Heart right ventricle (tissue), 16 donors: ENCODE measurements at regions of chr1 and their contacts with region 1.

Region 1: DNA sequence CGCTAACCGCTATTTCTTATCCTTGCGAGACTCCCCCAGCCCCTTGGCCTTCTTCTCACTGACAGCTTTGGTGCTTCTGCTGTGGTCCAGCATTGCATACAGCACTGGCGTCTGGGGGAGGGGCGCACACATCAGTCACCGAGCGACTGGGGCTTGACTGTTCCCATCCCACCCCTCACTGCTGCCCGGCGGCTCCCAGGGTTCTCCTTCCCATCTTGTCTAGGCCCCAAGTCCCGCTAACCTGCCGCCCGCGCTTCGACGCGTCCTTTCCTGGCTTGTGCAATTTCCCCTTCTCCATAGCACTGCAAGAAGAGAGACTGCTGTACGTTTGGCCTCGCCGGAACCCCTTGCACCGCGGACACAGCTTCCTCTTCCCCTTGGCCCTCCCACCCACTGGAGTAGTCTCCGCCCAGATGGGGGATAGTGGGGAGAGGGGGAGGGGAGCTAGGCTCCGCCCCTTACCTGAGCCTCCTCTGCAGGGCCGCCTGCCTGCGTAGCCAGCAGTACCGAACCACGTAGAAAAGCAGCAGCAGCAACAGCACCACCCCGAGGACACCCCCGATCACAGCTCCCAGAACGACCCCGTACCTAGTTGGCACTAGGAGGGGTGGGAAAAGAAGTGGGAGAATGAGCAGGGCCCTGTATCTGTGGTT is 3.8 kb downstream of the MPZ start:
- DNase-seq: peak; percentile 75 to 77
- ATAC-seq: peak; percentile 85 to 94 (median 91)
- H3K4me3 ChIP-seq: peak overlapping the region; percentile 51 to 75 (median 62)
- H3K27ac ChIP-seq: peak overlapping the region in 8 of 10 donors; percentile 28 to 93 (median 62)
- H3K4me1 ChIP-seq: peaks cover 0 to 52% (median 13%) of the 10 kb centered on the region in 9 donors
- H3K27me3 ChIP-seq: peaks cover 0 to 3% (median 0%) of the 10 kb centered on the region in 7 donors
- CTCF ChIP-seq: peak in 5 of 9 donors; percentile 10 to 39 (median 31)

Region 2: GRCh38 chr1:161342821-161343220 is 36.8 kb after region 1 on chr1:
- intact Hi-C with region 1: no loop called
- DNase-seq: no peak
- ATAC-seq: no peak
- H3K4me3 ChIP-seq: no peak overlapping the region
- H3K27ac ChIP-seq: no peak overlapping the region
- H3K4me1 ChIP-seq: peaks cover 0 to 10% (median 0%) of the 10 kb centered on the region in 9 donors
- H3K27me3 ChIP-seq: no peaks in the 10 kb centered on the region
- CTCF ChIP-seq: no peak

Region 3: GRCh38 chr1:161367684-161368400 is 61.8 kb after region 1 on chr1 and contains the start of gene CFAP126:
- intact Hi-C with region 1: loop called in 1 of 10 experiments (anchors 5 kb)
- DNase-seq: peak; percentile 35 to 79
- ATAC-seq: peak; percentile 88 to 96 (median 93)
- H3K4me3 ChIP-seq: no peak within 1 kb of the TSS
- H3K27ac ChIP-seq: peak within 1 kb of the TSS in 6 of 10 donors; percentile 8 to 69 (median 27)
- H3K4me1 ChIP-seq: peaks cover 0 to 14% (median 7%) of the 10 kb centered on the region in 9 donors
- H3K27me3 ChIP-seq: no peaks in the 10 kb centered on the region
- CTCF ChIP-seq: peak in 6 of 9 donors; percentile 25 to 54 (median 35)
- total RNA-seq, gene CFAP126: not detected